PC-3 (cell line): ENCODE measurements at regions of chr3 and their contacts with region 1.

Region 1: DNA sequence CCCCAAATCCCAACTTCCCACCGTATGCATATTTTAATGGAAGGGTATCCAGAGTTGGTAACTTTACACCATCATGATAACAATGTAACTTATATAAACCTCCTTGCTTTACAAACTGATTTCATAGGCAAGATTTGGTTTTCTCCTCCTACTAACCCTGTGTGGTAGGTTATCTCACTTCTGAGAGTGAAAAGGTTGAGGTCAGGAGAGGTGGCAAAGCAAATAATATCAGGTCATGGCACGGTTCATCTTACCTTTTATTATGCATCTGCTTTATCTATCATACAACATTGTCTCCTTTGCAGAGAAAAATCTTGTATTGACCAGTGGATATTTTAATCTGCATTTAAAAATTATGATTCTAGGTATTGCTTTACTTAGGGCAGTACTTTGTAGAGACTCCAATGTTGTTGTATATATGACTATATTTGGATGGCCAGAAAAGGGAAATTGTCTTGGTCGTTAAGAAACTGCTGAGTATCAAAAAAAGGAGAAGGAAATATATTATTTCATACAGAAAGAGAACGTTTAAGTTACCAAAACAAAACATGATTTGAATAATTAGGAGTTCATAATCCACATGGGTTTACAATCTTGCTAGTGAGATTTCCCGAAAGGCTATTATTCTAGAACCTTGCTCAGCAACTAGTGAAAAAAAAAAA is 30.4 kb downstream of the NFKBIZ start:
- DNase-seq: no peak
- ATAC-seq: no peak
- H3K4me3 ChIP-seq: no peak overlapping the region
- H3K27ac ChIP-seq: peak overlapping the region; percentile 47; the same call in 1 of the 2 replicates
- H3K4me1 ChIP-seq: peaks cover 26% of the 10 kb centered on the region
- H3K27me3 ChIP-seq: no peaks in the 10 kb centered on the region
- CTCF ChIP-seq: no peak

Region 2: GRCh38 chr3:101803173-101803782 is 76.5 kb before region 1 on chr3:
- CTCF ChIA-PET with region 1: no interaction called
- POLR2A ChIA-PET with region 1: no interaction called
- intact Hi-C with region 1: no loop called
- DNase-seq: peak; percentile 85
- ATAC-seq: peak; percentile 100
- H3K4me3 ChIP-seq: no peak overlapping the region
- H3K27ac ChIP-seq: no peak overlapping the region
- H3K4me1 ChIP-seq: no peaks in the 10 kb centered on the region; the same call in 1 of the 2 replicates
- H3K27me3 ChIP-seq: no peaks in the 10 kb centered on the region
- CTCF ChIP-seq: peak; percentile 92

Region 3: GRCh38 chr3:101903451-101903871 is 23.7 kb after region 1 on chr3:
- CTCF ChIA-PET with region 1: no interaction called
- POLR2A ChIA-PET with region 1: no interaction called
- intact Hi-C with region 1: loop called (anchors 1 kb)
- DNase-seq: peak; percentile 78
- ATAC-seq: peak; percentile 85
- H3K4me3 ChIP-seq: no peak overlapping the region
- H3K27ac ChIP-seq: peak overlapping the region; percentile 31
- H3K4me1 ChIP-seq: peaks cover 23% of the 10 kb centered on the region
- H3K27me3 ChIP-seq: no peaks in the 10 kb centered on the region
- CTCF ChIP-seq: no peak